Activated CD4-positive, alpha-beta T cell treated with anti-CD3 and anti-CD28 coated beads, Interleukin-2, amount 10 ng/mL, durations not matched to agents 7 days and 5 days (primary cell): ENCODE measurements at regions of chr17 and their contacts with region 1.

Region 1: GRCh38 chr17:75271233-75271954 is 363 bp upstream of the MIF4GD start:
- DNase-seq: peak; percentile 85
- H3K4me3 Mint-ChIP-seq: peak overlapping the region; percentile 78
- H3K27ac Mint-ChIP-seq: peak overlapping the region; percentile 84
- H3K4me1 Mint-ChIP-seq: peaks cover 35% of the 10 kb centered on the region
- H3K27me3 Mint-ChIP-seq: no peaks in the 10 kb centered on the region

Region 2: GRCh38 chr17:75250009-75250471 is 21.4 kb before region 1 on chr17:
- CTCF ChIA-PET with region 1: interaction called, 18 read pairs
- POLR2A ChIA-PET with region 1: no interaction called
- DNase-seq: peak; percentile 69
- H3K4me3 Mint-ChIP-seq: peak overlapping the region; percentile 56
- H3K27ac Mint-ChIP-seq: peak overlapping the region; percentile 84
- H3K4me1 Mint-ChIP-seq: peaks cover 57% of the 10 kb centered on the region
- H3K27me3 Mint-ChIP-seq: no peaks in the 10 kb centered on the region

Region 3: DNA sequence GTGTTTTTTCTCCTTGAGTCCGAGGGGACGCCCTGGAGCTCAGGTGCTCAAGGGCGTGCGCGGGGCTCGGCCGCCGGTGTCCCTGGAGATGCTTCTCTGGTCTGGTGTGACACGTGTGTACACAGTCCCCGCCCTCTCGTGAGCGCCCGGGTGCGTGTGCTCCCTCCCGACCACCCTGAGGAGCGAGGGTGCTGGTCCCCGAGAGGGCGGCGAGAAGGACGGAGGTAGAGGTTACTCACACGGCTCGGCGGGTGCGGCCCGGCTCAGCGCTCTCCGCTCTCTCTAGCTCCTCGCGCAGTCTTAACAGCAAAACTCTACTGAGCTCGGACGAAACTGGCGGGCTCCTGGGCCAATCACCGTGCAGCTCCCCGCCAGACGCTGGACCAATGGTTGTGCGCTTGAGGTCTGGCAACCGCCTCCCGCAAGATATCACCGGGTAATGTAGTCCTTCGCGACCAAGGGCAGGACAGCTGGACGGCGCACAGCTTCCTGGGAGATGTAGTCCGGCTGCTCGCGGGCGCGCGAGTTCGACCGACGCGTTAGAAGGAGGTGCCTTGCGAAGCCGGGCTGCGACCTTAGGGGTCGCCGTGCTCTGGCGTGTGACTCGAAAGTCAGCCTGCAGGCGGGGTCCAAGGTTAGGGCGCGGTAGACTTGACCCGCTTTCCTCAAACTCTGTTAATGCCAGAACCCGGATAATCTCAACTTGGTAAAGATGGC is 17.9 kb after region 1 on chr17 and contains the start of gene SLC25A19:
- CTCF ChIA-PET with region 1: interaction called, 50 read pairs
- POLR2A ChIA-PET with region 1: interaction called, 20 read pairs
- DNase-seq: peak; percentile 99
- H3K4me3 Mint-ChIP-seq: peak within 1 kb of the TSS; percentile 98
- H3K27ac Mint-ChIP-seq: peak within 1 kb of the TSS; percentile 100
- H3K4me1 Mint-ChIP-seq: peaks cover 22% of the 10 kb centered on the region
- H3K27me3 Mint-ChIP-seq: no peaks in the 10 kb centered on the region
- total RNA-seq, gene SLC25A19: 27.6 to 30.5 TPM

Region 4: GRCh38 chr17:75295201-75296158 is 24.1 kb after region 1 on chr17:
- CTCF ChIA-PET with region 1: interaction called, 50 read pairs
- POLR2A ChIA-PET with region 1: no interaction called
- DNase-seq: no peak
- H3K4me3 Mint-ChIP-seq: no peak overlapping the region
- H3K27ac Mint-ChIP-seq: peak overlapping the region; percentile 80
- H3K4me1 Mint-ChIP-seq: peaks cover 29% of the 10 kb centered on the region
- H3K27me3 Mint-ChIP-seq: no peaks in the 10 kb centered on the region

Region 5: DNA sequence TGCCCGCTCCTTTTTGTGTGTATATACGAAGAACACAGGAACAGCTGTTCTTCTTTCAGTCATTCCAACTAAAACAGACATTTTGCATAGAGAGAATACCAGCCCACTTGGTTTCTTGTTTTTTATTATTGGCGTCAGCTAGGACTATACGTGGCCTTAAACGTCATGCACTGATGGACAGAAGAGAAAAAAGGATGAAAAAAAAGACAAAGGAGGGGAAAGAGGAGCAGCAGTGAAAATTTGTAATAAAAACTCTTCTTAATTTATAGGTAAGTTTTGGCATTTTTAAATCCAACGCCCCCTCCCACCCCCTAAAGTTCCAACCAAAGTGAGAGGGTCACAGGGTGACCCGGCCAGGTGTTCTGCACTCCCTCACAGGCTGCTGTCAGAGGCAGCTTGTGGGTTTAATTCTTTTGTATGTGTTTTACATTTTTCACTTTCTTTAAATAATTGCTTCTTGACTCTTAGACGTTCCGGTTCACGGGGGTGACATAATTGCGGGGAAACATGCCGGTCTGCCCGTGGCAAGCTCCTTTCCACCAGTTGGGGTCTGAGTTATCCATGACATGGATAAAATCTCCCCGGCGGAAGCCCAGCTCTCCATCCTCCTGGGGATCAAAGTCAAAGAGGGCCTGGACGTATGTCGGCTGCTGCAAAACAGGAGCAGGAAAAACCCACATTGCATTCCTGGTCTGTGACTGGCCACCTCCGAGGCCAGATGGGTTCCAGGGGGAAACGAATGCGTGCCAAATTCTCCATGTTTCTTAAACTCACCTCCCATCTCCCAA is 48.7 kb after region 1 on chr17:
- CTCF ChIA-PET with region 1: interaction called, 16 read pairs
- POLR2A ChIA-PET with region 1: no interaction called
- DNase-seq: no peak
- H3K4me3 Mint-ChIP-seq: no peak overlapping the region
- H3K27ac Mint-ChIP-seq: no peak overlapping the region
- H3K4me1 Mint-ChIP-seq: peaks cover 22% of the 10 kb centered on the region
- H3K27me3 Mint-ChIP-seq: no peaks in the 10 kb centered on the region

Region 6: GRCh38 chr17:75364078-75364477 is 92.7 kb after region 1 on chr17:
- CTCF ChIA-PET with region 1: no interaction called
- POLR2A ChIA-PET with region 1: no interaction called
- DNase-seq: no peak
- H3K4me3 Mint-ChIP-seq: no peak overlapping the region
- H3K27ac Mint-ChIP-seq: no peak overlapping the region
- H3K4me1 Mint-ChIP-seq: peaks cover 87% of the 10 kb centered on the region
- H3K27me3 Mint-ChIP-seq: no peaks in the 10 kb centered on the region

Region 7: GRCh38 chr17:75393523-75394331 is 122.3 kb after region 1 on chr17:
- CTCF ChIA-PET with region 1: interaction called, 15 read pairs
- POLR2A ChIA-PET with region 1: interaction called, 4 read pairs
- DNase-seq: peak; percentile 86
- H3K4me3 Mint-ChIP-seq: peak overlapping the region; percentile 90
- H3K27ac Mint-ChIP-seq: peak overlapping the region; percentile 83
- H3K4me1 Mint-ChIP-seq: peaks cover 75% of the 10 kb centered on the region
- H3K27me3 Mint-ChIP-seq: no peaks in the 10 kb centered on the region

Region 8: DNA sequence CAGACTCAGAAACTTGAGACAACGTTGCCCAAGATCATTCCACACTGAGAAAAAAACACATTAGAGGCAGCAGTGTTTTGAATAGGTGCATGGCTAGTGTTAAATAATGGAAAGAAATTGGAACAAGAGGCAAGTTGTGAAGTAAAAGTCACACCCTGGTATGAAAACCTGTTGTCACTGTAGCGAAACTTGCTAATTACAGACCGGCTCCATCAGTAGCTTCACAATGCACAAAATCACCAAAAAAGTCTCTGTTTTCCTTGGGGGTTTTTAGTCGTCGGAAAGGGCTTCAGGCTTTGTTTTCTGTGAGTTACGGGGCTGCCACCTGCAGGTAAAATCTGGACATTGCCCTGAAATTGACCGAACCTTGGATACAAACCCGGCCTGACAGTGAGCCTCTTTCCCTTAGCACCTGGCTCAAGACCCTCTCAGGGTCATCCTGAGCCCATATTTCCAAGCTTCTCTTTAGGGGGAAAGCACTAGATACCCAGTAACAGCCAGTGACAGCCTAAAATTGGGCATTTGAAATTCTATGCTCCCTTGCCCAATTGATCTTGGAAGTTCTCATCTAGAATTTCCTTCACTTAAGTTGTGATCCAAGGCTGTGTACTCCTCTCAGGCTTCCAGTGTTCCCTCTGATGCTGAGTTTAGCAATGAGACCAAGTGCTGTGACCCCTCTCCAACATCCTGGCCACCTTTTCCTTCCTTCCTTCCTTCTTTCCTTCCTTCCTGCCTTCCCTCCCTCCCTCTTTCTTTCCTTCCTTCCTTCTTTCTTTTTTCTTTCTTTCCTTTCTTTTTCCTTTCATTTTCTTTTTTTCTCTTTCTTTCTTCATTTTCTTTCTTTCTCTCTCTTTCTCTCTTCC is 141.3 kb after region 1 on chr17:
- CTCF ChIA-PET with region 1: interaction called, 17 read pairs
- POLR2A ChIA-PET with region 1: interaction called, 3 read pairs
- DNase-seq: peak; percentile 83
- H3K4me3 Mint-ChIP-seq: peak overlapping the region; percentile 5
- H3K27ac Mint-ChIP-seq: peak overlapping the region; percentile 61
- H3K4me1 Mint-ChIP-seq: peaks cover 30% of the 10 kb centered on the region
- H3K27me3 Mint-ChIP-seq: peaks cover 7% of the 10 kb centered on the region